ENCODE measurements at regions of chrX and their contacts with region 1.

Region 1: GRCh38 chrX:30570505-30570904 is 7.1 kb downstream of the TASL start:
- DNase-seq: peak; percentile 34
- H3K4me3 ChIP-seq: no peak overlapping the region
- H3K27ac ChIP-seq: no peak overlapping the region
- H3K4me1 ChIP-seq: peaks cover 10% of the 10 kb centered on the region
- CTCF ChIP-seq: peak; percentile 67

Region 2: DNA sequence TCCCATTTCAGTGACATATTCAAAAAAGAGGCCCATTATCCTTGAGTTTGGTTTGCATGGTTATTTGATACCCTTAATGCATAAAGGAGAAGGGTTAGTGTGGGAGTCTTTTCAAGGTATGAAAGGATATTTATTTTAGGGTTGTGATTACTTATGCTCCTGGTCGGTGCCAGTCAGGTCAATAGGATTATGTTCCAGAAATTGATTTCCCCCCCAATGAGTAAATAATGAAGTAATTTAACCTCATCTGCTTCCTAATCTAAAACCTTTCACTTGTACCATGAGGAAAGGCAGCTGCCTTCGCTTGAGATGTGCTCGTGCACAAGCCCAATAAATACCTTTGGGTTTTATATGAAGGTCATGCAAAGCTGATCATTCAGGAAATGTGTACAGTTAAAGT is 206.3 kb before region 1 on chrX:
- CTCF ChIA-PET with region 1: no interaction called
- POLR2A ChIA-PET with region 1: no interaction called
- intact Hi-C with region 1: no loop called
- DNase-seq: no peak
- H3K4me3 ChIP-seq: no peak overlapping the region
- H3K27ac ChIP-seq: no peak overlapping the region
- H3K4me1 ChIP-seq: no peaks in the 10 kb centered on the region
- CTCF ChIP-seq: no peak

Region 3: GRCh38 chrX:30593435-30594200 is 23.1 kb after region 1 on chrX:
- CTCF ChIA-PET with region 1: no interaction called
- POLR2A ChIA-PET with region 1: interaction called, 3 read pairs
- intact Hi-C with region 1: loop called (anchors 1 kb)
- DNase-seq: peak; percentile 52
- H3K4me3 ChIP-seq: no peak overlapping the region
- H3K27ac ChIP-seq: no peak overlapping the region
- H3K4me1 ChIP-seq: peaks cover 28% of the 10 kb centered on the region
- CTCF ChIP-seq: peak; percentile 69

Region 4: DNA sequence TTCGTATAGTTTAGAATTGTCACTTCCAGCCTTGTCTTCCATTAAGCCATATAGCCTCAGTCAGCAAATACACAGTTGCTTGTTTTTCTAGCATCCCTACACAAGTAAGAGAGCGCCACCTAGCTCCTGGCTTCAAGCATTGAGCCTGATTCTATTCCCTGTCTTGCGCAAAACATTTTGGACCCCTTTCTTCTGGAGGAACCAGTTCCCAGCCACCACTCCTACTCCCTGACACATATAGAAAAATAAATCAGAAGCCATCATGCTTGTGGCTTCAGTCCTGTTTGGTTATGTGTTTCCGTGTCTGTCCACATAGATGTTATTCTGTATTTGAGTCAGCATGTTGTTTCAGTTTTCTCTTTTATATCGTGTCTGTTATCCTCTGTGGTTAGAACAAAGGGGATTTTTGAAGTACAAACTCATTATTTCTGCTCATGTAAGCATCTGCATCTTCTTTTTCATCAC is 142.6 kb after region 1 on chrX:
- CTCF ChIA-PET with region 1: no interaction called
- POLR2A ChIA-PET with region 1: interaction called, 3 read pairs
- intact Hi-C with region 1: loop called (anchors 2 kb)
- DNase-seq: peak; percentile 46
- H3K4me3 ChIP-seq: no peak overlapping the region
- H3K27ac ChIP-seq: no peak overlapping the region
- H3K4me1 ChIP-seq: no peaks in the 10 kb centered on the region
- CTCF ChIP-seq: peak; percentile 77

Measured in OCI-LY7 (cell line).